Esophagus muscularis mucosa (tissue), 4 donors: ENCODE measurements at regions of chr14 and their contacts with region 1.

Region 1: DNA sequence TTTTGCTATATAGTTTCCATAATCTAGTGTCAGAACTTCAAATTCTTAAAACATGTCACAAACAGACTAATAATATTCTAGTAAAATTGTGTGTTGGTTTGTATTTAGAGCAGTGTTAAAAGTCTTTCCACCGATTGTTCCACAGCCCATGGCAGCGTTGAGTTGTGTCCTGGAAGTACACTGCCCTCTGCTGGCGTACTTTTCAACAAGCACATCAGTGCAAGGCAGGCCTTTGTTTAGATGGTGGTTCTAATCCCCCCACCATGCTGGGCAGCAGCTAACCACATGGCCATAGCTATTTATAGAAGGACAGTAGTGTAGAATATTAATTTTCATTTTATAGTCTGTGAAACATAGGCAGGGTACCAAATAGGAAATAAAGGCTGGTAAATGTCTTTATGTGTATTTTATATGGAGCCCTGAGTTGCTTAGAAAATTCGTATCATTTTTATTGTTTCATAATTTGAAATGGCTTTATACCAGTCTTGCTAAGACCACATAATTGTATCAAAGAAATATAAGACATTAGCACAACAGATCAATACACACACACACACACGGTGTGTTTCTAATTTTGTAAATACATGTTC is 235.4 kb downstream of the SEC23A start:
- DNase-seq: no peak
- H3K4me3 ChIP-seq: no peak overlapping the region
- H3K27ac ChIP-seq: no peak overlapping the region
- H3K4me1 ChIP-seq: peaks cover 5 to 18% (median 17%) of the 10 kb centered on the region in 4 donors
- H3K27me3 ChIP-seq: no peaks in the 10 kb centered on the region
- CTCF ChIP-seq: peak; percentile 69 to 82 (median 81)
- EP300 ChIP-seq: no peak
- POLR2A ChIP-seq: no peak

Region 2: GRCh38 chr14:37903343-37904191 is 964.1 kb before region 1 on chr14:
- intact Hi-C with region 1: loop called (anchors 5 kb)
- DNase-seq: no peak
- H3K4me3 ChIP-seq: no peak overlapping the region
- H3K27ac ChIP-seq: no peak overlapping the region
- H3K4me1 ChIP-seq: peaks cover 0 to 5% (median 0%) of the 10 kb centered on the region in 4 donors
- H3K27me3 ChIP-seq: no peaks in the 10 kb centered on the region
- CTCF ChIP-seq: peak; percentile 46 to 63 (median 51)
- EP300 ChIP-seq: no peak
- POLR2A ChIP-seq: no peak

Region 3: GRCh38 chr14:38627163-38627562 is 240.5 kb before region 1 on chr14:
- intact Hi-C with region 1: no loop called
- DNase-seq: no peak
- H3K4me3 ChIP-seq: no peak overlapping the region
- H3K27ac ChIP-seq: no peak overlapping the region
- H3K4me1 ChIP-seq: no peaks in the 10 kb centered on the region
- H3K27me3 ChIP-seq: no peaks in the 10 kb centered on the region
- CTCF ChIP-seq: no peak
- EP300 ChIP-seq: no peak
- POLR2A ChIP-seq: no peak

Region 4: GRCh38 chr14:38721822-38722431 is 145.7 kb before region 1 on chr14:
- intact Hi-C with region 1: loop called (anchors 1 kb)
- DNase-seq: no peak
- H3K4me3 ChIP-seq: no peak overlapping the region
- H3K27ac ChIP-seq: no peak overlapping the region
- H3K4me1 ChIP-seq: peaks cover 0 to 10% (median 5%) of the 10 kb centered on the region in 4 donors
- H3K27me3 ChIP-seq: no peaks in the 10 kb centered on the region
- CTCF ChIP-seq: peak; percentile 82 to 86 (median 82)
- EP300 ChIP-seq: no peak
- POLR2A ChIP-seq: no peak

Region 5: DNA sequence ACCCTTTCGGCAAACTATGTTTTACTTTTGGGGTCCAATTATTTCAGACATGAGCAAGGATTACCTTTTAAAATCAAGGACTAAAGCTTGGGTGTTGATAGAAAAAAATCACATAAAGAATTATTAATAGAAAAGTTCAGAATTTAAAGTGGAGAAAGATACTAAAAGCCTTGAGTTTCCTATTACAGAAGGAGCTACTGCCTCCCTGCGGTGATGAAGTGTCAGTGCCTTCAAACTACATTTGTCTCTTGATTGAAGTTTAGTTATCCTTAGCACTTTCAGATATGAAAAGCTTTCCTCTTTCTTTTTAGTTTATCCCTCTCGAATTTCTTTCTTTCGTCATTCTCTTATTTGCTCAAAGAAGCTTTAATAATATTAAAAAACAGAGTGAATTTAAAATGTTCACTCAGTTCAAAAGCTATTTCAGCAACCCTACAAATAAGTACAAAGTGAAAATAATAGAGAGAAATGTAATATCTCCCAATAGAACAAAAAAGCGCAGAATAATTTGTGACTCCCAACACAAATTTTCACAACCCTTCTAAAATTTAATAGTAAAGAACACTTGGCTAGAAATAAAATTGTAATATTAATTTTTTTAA is 147.8 kb after region 1 on chr14:
- intact Hi-C with region 1: loop called (anchors 10 kb)
- DNase-seq: no peak
- H3K4me3 ChIP-seq: no peak overlapping the region
- H3K27ac ChIP-seq: no peak overlapping the region
- H3K4me1 ChIP-seq: no peaks in the 10 kb centered on the region
- H3K27me3 ChIP-seq: no peaks in the 10 kb centered on the region
- CTCF ChIP-seq: peak; percentile 64 to 74 (median 65)
- EP300 ChIP-seq: no peak
- POLR2A ChIP-seq: no peak